Endothelial cell of umbilical vein (primary cell): ENCODE measurements at regions of chr11 and their contacts with region 1.

Region 1: DNA sequence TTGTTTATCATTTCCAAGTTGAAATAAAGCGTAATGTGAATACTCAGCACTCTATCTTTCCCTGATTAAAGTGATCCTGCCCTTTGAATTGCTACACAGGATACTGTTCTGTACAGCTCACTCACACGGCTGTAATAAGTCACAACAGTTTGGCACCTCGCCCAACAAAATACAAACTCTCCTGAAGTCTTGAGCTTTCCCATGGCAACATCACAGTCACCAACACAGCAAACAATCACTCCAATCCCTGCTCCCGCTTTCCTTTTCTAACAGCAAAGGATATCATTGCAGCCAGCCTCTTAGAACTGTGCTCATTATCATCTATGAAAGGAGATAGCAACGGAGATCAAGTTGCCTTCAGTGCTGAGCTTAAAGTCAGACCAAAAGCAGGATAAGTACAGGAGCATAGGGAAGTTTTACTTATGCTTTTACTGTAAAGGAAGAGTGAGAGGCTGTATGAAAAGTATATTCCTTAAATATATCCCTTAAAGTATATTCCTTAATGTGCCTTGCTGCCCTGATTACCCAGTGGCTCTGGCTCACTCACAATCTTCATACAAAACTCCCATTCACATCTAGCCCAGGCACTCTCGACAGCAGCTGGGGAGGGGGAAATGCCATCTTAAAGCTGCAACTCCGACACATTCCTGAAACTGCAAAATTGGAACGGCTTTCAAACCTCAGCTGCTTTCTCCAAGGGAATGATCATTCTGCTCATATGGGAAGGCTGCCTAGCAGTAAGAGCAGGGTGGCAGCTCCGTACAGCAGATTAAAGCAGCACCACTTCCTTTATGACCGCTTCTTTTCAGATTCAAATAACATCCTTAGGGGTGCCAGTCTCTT is 35.8 kb downstream of the MAML2 start:
- DNase-seq: peak; percentile 99
- H3K4me3 ChIP-seq: peak overlapping the region in 2 of 3 experiments; percentile 8 to 24
- H3K27ac ChIP-seq: peak overlapping the region; percentile 98
- H3K4me1 ChIP-seq: peaks cover 84% of the 10 kb centered on the region
- H3K27me3 ChIP-seq: no peaks in the 10 kb centered on the region
- CTCF ChIP-seq: no peak
- POLR2A ChIP-seq: peak; percentile 52

Region 2: DNA sequence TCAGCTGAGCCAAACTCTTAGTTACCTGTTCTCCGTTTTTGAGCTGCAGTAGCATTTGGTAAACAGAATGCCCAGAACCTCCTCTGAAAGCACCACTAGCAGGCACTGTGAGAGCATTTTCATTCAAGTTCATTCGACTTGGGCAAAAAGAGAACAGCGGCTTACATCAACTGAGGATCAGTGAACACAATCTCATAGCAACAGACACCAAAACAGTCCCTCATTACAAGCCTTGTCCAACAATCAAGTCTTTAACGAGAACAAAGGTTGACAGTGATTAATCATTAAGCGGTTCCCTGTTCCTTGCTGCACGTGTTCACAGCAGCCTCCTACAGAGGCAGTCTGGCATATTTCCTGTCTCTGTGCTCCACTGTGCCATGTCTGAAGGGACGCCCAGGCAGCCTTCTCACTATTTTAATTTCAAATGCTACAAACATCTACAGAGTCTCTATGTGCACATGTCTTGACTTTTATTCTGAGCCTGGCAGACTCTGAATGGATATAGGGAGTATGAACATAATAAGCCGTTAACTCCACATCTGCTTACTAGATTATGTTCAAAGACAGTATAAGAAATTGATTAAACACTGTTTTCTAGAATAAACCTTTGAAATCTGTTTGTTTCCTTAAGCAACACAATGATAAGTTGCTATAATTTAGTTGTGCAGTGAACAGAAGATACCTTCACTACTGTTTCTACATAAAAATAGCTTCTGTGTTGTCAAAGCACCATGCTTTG is 294.9 kb before region 1 on chr11:
- CTCF ChIA-PET with region 1: no interaction called
- POLR2A ChIA-PET with region 1: no interaction called
- dilution Hi-C with region 1: no loop called
- intact Hi-C with region 1: loop called (anchors 1 kb)
- DNase-seq: peak; percentile 85
- H3K4me3 ChIP-seq: no peak overlapping the region
- H3K27ac ChIP-seq: no peak overlapping the region
- H3K4me1 ChIP-seq: peaks cover 8% of the 10 kb centered on the region
- H3K27me3 ChIP-seq: no peaks in the 10 kb centered on the region
- CTCF ChIP-seq: peak; percentile 50 to 58
- POLR2A ChIP-seq: no peak

Region 3: DNA sequence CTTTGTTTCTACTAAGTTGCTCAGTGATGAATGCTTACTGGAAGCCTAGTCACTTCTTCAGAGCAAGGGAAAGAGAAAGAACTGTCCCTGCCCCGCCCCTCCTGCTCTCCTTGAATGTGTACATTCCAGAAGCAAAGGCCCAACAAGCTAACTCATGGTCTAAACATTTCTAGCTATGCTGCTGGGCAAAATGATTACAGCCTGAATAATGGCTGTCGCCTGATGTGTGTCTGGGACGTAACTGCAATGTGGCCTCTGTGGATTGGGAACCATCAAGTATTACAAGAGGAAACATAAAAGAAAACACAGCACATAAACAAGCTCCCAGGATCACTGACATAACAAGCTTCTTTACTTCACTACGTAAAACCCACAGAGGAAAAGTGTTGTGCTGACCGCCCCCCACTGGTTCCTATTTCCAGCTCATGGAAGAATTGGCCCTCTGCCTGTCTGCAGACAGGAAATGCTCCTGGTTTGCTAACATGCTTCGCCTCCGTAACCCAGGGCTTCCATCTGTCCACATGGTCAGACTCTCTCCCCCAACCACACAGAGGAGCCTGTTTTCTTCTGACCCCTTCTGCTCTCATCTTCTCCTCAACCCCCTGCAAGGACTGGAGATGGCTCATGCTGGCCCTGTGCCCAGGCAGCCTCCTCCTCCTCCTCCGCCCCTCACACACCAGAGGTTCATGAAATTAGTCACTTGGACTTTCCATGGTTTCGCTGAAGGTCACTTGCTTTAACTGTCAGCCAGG is 151.4 kb before region 1 on chr11:
- CTCF ChIA-PET with region 1: interaction called, 9 read pairs
- POLR2A ChIA-PET with region 1: no interaction called
- dilution Hi-C with region 1: no loop called
- intact Hi-C with region 1: loop called (anchors 1 kb)
- DNase-seq: peak; percentile 92
- H3K4me3 ChIP-seq: no peak overlapping the region
- H3K27ac ChIP-seq: peak overlapping the region; percentile 93
- H3K4me1 ChIP-seq: peaks cover 38% of the 10 kb centered on the region
- H3K27me3 ChIP-seq: no peaks in the 10 kb centered on the region
- CTCF ChIP-seq: peak; percentile 29 to 30
- POLR2A ChIP-seq: no peak

Region 4: DNA sequence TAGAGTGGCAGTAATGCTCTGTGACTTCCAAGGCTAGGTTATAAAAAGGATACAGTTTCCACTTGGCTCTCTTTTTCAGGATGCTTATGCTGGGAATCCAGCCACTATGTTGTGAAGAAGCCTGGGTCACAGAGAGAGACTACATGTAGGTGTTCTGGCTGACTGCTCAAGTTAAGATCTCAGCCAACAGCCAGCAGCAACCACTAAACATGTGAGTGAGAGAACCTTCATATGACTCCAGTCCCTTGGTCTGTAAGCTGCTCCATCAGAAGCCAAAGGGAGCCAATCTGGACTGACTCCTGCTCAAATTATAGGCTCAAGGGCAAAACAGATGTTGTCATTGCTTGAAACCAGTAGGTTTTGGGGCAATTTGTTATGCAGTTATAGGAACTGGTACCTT is 126.8 kb before region 1 on chr11:
- CTCF ChIA-PET with region 1: no interaction called
- POLR2A ChIA-PET with region 1: no interaction called
- dilution Hi-C with region 1: no loop called
- intact Hi-C with region 1: no loop called
- DNase-seq: no peak
- H3K4me3 ChIP-seq: no peak overlapping the region
- H3K27ac ChIP-seq: no peak overlapping the region
- H3K4me1 ChIP-seq: no peaks in the 10 kb centered on the region
- H3K27me3 ChIP-seq: no peaks in the 10 kb centered on the region
- CTCF ChIP-seq: no peak
- POLR2A ChIP-seq: no peak

Region 5: GRCh38 chr11:96215110-96215782 is 91.9 kb before region 1 on chr11:
- CTCF ChIA-PET with region 1: no interaction called
- POLR2A ChIA-PET with region 1: no interaction called
- dilution Hi-C with region 1: no loop called
- intact Hi-C with region 1: loop called (anchors 1 kb)
- DNase-seq: peak; percentile 81
- H3K4me3 ChIP-seq: peak overlapping the region in 1 of 3 experiments; percentile 4
- H3K27ac ChIP-seq: peak overlapping the region; percentile 92
- H3K4me1 ChIP-seq: peaks cover 66% of the 10 kb centered on the region
- H3K27me3 ChIP-seq: no peaks in the 10 kb centered on the region
- CTCF ChIP-seq: no peak
- POLR2A ChIP-seq: peak; percentile 38

Region 6: GRCh38 chr11:96254087-96254486 is 53.1 kb before region 1 on chr11:
- CTCF ChIA-PET with region 1: no interaction called
- POLR2A ChIA-PET with region 1: interaction called, 3 read pairs
- dilution Hi-C with region 1: no loop called
- intact Hi-C with region 1: loop called (anchors 1 kb)
- DNase-seq: peak; percentile 94
- H3K4me3 ChIP-seq: peak overlapping the region in 1 of 3 experiments; percentile 58
- H3K27ac ChIP-seq: peak overlapping the region; percentile 65
- H3K4me1 ChIP-seq: peaks cover 33% of the 10 kb centered on the region
- H3K27me3 ChIP-seq: no peaks in the 10 kb centered on the region
- CTCF ChIP-seq: no peak
- POLR2A ChIP-seq: peak; percentile 36